Uterus (tissue), 4 donors: ENCODE measurements at regions of chr13 and their contacts with region 1.

Region 1: DNA sequence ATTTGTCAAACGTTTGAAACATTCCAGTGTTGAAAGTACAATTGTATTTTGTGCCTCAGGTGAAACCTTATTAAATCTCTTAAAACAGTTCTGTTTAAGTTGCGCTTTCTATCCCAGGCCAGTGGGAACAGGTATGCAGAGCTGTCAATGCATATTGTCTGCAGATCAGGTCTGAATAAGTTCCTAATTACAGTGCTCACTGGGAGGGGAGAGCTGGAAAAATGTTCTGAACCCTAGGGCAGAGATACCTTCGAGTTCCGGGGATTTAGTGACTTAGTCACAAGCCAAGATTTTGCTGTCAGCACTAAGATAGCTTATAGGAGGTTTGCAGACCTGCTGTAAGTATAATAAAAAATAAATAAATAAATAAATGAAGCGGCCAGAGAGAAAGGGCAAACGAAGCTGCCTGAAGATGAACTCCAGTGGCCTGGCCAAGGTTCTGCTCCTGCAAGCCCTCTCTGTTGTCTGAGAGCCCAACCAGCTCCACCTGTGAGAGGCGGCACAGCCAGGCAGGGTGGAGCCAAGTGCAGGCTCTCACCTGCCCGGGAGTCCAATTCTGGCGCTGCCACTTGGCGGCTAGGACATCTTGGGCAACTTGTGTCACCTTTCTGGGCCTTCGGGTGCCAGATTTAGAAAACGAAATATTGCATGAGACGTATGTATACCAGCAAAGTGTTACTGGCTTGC is 97.9 kb upstream of the SLC7A1 start:
- DNase-seq: no peak
- H3K4me3 ChIP-seq: no peak overlapping the region
- H3K27ac ChIP-seq: no peak overlapping the region
- H3K4me1 ChIP-seq: no peaks in the 10 kb centered on the region
- H3K27me3 ChIP-seq: no peaks in the 10 kb centered on the region
- CTCF ChIP-seq: no peak
- POLR2A ChIP-seq: no peak

Region 2: GRCh38 chr13:28984825-28985224 is 708.6 kb before region 1 on chr13:
- intact Hi-C with region 1: loop called (anchors 5 kb)
- DNase-seq: no peak
- H3K4me3 ChIP-seq: no peak overlapping the region
- H3K27ac ChIP-seq: no peak overlapping the region
- H3K4me1 ChIP-seq: no peaks in the 10 kb centered on the region
- H3K27me3 ChIP-seq: no peaks in the 10 kb centered on the region
- CTCF ChIP-seq: no peak
- POLR2A ChIP-seq: no peak